MCF 10A (cell line): ENCODE measurements at regions of chr18 and their contacts with region 1.

Region 1: GRCh38 chr18:3447895-3448837 is 1.8 kb upstream of the TGIF1 start:
- DNase-seq: peak; percentile 98
- H3K4me3 Mint-ChIP-seq: peak overlapping the region; percentile 95
- H3K27ac Mint-ChIP-seq: peak overlapping the region; percentile 99
- H3K4me1 Mint-ChIP-seq: peaks cover 12% of the 10 kb centered on the region
- H3K27me3 Mint-ChIP-seq: no peaks in the 10 kb centered on the region
- CTCF ChIP-seq: no peak

Region 2: GRCh38 chr18:3297025-3297984 is 150.9 kb before region 1 on chr18:
- CTCF ChIA-PET with region 1: interaction called, 21 read pairs
- POLR2A ChIA-PET with region 1: interaction called, 120 read pairs
- intact Hi-C with region 1: loop called (anchors 1 kb)
- DNase-seq: peak; percentile 97
- H3K4me3 Mint-ChIP-seq: peak overlapping the region; percentile 95
- H3K27ac Mint-ChIP-seq: peak overlapping the region; percentile 47
- H3K4me1 Mint-ChIP-seq: peaks cover 5% of the 10 kb centered on the region
- H3K27me3 Mint-ChIP-seq: no peaks in the 10 kb centered on the region
- CTCF ChIP-seq: peak; percentile 36

Region 3: GRCh38 chr18:3350566-3351527 is 97.3 kb before region 1 on chr18:
- CTCF ChIA-PET with region 1: interaction called, 10 read pairs
- POLR2A ChIA-PET with region 1: interaction called, 40 read pairs
- intact Hi-C with region 1: no loop called
- DNase-seq: peak; percentile 73
- H3K4me3 Mint-ChIP-seq: no peak overlapping the region
- H3K27ac Mint-ChIP-seq: no peak overlapping the region
- H3K4me1 Mint-ChIP-seq: peaks cover 14% of the 10 kb centered on the region
- H3K27me3 Mint-ChIP-seq: no peaks in the 10 kb centered on the region
- CTCF ChIP-seq: no peak

Region 4: DNA sequence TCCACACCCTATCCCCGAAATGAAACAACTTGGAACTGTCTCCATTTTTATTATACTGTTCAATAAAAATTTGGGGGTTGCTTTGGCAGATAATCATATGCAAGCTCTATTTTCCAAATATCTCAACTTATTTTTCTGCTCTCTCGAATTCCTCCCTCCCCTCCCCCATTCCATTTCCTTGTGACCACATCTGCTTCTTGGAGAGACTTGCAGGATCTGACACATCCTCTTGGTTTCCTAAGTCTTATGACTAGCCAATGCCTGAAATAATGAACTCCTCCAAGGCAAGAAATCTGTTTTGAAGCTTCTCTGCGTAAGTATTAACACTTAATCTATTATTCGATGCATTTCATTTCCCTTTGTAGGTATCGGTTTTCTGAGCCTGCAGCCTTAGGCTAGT is 17.9 kb after region 1 on chr18:
- CTCF ChIA-PET with region 1: interaction called, 4 read pairs
- POLR2A ChIA-PET with region 1: interaction called, 95 read pairs
- intact Hi-C with region 1: no loop called
- DNase-seq: peak; percentile 77
- H3K4me3 Mint-ChIP-seq: no peak overlapping the region
- H3K27ac Mint-ChIP-seq: no peak overlapping the region
- H3K4me1 Mint-ChIP-seq: peaks cover 13% of the 10 kb centered on the region
- H3K27me3 Mint-ChIP-seq: no peaks in the 10 kb centered on the region
- CTCF ChIP-seq: no peak

Region 5: DNA sequence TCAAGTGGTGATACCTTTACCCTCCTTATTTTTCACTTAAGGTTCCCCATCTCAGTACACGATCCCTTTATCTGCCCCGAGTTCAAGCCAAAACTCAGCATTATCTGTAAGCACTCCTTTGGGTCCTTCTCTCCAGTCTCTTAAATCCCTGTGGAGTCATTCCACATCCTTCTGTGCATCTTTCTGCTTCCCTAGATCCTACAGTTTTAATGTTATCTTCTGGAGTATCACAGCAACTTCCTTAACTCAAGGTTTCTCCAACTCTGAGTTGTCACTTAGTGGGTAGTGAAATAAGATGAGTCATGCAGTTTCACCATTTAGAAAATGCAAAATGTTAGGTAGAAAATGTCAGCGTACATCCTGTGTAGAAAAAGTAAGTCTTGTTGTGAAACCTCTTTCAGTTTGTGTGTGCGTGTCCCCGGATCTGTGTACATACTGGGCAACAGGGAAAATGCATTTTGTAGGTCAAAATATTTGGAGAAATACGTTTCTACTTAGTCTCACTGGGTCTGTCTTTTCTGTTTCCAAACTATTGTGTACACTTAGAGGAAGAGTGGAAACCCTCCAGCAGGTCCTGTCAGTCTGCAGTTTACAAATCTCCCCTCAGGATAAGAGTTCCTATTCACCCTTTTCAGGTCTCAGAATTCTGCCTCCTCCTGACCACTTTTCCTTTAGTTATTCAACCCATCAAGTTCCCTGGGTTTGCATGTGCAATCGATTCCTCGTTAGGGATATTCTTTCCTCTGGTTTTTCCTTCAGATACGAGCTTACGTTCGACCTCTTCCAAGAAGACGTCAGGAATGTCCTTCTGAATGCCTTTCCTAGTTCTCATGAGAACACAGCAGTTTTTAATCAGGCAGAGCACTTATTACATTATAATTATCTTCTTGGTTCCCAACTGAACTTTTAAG is 156.6 kb after region 1 on chr18:
- CTCF ChIA-PET with region 1: interaction called, 5 read pairs
- POLR2A ChIA-PET with region 1: interaction called, 242 read pairs
- intact Hi-C with region 1: no loop called
- DNase-seq: peak; percentile 91
- H3K4me3 Mint-ChIP-seq: no peak overlapping the region
- H3K27ac Mint-ChIP-seq: no peak overlapping the region
- H3K4me1 Mint-ChIP-seq: no peaks in the 10 kb centered on the region
- H3K27me3 Mint-ChIP-seq: no peaks in the 10 kb centered on the region
- CTCF ChIP-seq: no peak

Region 6: GRCh38 chr18:3665780-3666525 is 217.8 kb after region 1 on chr18:
- CTCF ChIA-PET with region 1: interaction called, 86 read pairs
- POLR2A ChIA-PET with region 1: interaction called, 127 read pairs
- intact Hi-C with region 1: no loop called
- DNase-seq: peak; percentile 91
- H3K4me3 Mint-ChIP-seq: no peak overlapping the region
- H3K27ac Mint-ChIP-seq: peak overlapping the region; percentile 72
- H3K4me1 Mint-ChIP-seq: peaks cover 15% of the 10 kb centered on the region
- H3K27me3 Mint-ChIP-seq: no peaks in the 10 kb centered on the region
- CTCF ChIP-seq: peak; percentile 91

Region 7: GRCh38 chr18:4004183-4004829 is 556.1 kb after region 1 on chr18:
- CTCF ChIA-PET with region 1: no interaction called
- POLR2A ChIA-PET with region 1: no interaction called
- intact Hi-C with region 1: no loop called
- DNase-seq: peak; percentile 13
- H3K4me3 Mint-ChIP-seq: no peak overlapping the region
- H3K27ac Mint-ChIP-seq: no peak overlapping the region
- H3K4me1 Mint-ChIP-seq: peaks cover 10% of the 10 kb centered on the region
- H3K27me3 Mint-ChIP-seq: peaks cover 10% of the 10 kb centered on the region
- CTCF ChIP-seq: no peak